ENCODE measurements at regions of chr12 and their contacts with region 1.

Region 1: GRCh38 chr12:120012067-120012621 is 23.1 kb downstream of the BICDL1 start:
- DNase-seq: peak; percentile 87
- ATAC-seq: peak; percentile 70
- H3K4me3 Mint-ChIP-seq: peak overlapping the region; percentile 65
- H3K27ac Mint-ChIP-seq: peak overlapping the region; percentile 99
- H3K4me1 Mint-ChIP-seq: peaks cover 91% of the 10 kb centered on the region
- H3K27me3 Mint-ChIP-seq: no peaks in the 10 kb centered on the region

Region 2: GRCh38 chr12:119980242-119980641 is 31.9 kb before region 1 on chr12:
- CTCF ChIA-PET with region 1: interaction called, 3 read pairs
- POLR2A ChIA-PET with region 1: interaction called, 19 read pairs
- intact Hi-C with region 1: loop called (anchors 1 kb)
- DNase-seq: peak; percentile 21
- ATAC-seq: peak; percentile 96
- H3K4me3 Mint-ChIP-seq: peak overlapping the region; percentile 30
- H3K27ac Mint-ChIP-seq: peak overlapping the region; percentile 69
- H3K4me1 Mint-ChIP-seq: peaks cover 23% of the 10 kb centered on the region
- H3K27me3 Mint-ChIP-seq: peaks cover 6% of the 10 kb centered on the region

Region 3: DNA sequence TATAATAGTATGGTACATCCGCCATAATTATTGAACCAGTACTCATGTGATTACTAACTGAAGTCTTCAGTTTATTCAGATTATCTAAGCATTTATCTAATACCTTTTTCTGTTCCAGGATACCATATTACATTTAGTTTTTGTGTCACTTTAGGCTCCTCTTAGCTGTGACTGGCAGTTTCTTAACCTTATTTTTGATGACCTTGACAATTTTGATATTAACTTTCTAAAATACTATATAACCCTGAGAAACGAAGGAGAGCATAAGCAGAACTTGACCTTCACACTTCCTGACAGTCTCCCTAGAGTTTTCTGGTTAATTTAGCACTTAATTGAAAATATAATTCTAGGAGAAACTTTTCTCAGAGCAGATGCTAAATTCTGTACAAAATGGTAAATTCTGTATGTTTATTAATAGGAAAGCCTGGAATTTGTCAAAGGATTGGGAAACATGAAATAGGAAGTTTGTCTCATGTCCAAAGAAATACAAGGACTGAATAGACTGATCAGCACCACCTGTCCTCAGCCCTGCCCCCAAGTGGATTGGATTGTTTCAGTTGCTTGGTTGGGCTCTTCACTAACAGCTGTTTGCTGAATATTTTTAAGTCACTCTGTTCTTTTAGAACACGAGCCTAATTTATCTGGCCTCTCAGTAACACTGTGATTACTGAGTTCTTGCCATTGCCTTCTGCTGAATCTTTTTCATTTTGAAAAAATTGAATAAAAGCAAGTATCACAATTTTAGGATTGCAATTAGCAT is 17.1 kb before region 1 on chr12:
- CTCF ChIA-PET with region 1: interaction called, 22 read pairs
- POLR2A ChIA-PET with region 1: interaction called, 98 read pairs
- intact Hi-C with region 1: loop called in 1 of 2 experiments (anchors 2 kb)
- DNase-seq: no peak
- ATAC-seq: no peak
- H3K4me3 Mint-ChIP-seq: no peak overlapping the region
- H3K27ac Mint-ChIP-seq: peak overlapping the region; percentile 63
- H3K4me1 Mint-ChIP-seq: peaks cover 78% of the 10 kb centered on the region
- H3K27me3 Mint-ChIP-seq: no peaks in the 10 kb centered on the region

Region 4: DNA sequence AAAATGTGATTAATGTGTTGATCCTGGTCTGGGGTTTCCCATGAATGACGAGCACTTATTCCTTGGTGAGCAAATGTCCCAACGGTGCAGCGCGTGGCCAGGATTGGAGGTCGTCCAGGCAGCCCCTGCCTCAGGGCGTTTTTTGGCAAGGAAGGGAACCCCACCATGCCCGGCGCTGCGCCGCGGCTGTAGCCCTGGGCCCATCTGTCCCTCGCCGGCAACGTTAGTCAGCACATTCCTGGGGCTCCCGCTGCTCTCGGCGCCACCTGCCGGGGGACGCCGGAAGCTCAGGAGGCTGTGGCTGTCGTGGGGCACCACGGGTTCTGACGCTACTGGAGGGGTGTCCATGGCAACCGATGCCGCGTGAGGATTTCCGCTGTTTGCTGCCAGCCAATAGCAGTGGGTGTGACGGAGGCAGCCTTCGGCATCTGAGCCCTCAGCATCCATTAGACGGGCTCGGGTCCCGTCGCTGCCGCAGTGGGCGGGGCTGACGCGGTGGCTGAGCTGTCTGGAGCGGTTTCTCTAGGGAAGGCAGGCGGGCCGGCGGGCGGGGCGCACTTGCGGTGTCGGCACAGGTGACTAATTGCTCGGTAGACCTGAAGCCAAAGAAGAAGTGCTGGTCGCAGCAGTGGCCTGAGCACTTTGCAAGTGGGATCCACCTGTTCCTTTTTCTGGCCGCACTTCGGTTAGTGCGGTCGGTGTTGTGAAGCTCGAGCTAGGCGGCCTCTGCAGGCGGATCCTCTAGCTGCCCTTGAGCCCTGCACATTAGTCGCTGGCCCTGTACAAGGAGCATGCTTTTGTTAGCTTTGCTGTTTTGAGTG is 74.9 kb after region 1 on chr12:
- CTCF ChIA-PET with region 1: interaction called, 11 read pairs
- POLR2A ChIA-PET with region 1: interaction called, 6 read pairs
- intact Hi-C with region 1: loop called (anchors 1 kb)
- DNase-seq: peak; percentile 100
- ATAC-seq: peak; percentile 98
- H3K4me3 Mint-ChIP-seq: peak overlapping the region; percentile 46
- H3K27ac Mint-ChIP-seq: peak overlapping the region; percentile 75
- H3K4me1 Mint-ChIP-seq: peaks cover 41% of the 10 kb centered on the region
- H3K27me3 Mint-ChIP-seq: no peaks in the 10 kb centered on the region

Region 5: DNA sequence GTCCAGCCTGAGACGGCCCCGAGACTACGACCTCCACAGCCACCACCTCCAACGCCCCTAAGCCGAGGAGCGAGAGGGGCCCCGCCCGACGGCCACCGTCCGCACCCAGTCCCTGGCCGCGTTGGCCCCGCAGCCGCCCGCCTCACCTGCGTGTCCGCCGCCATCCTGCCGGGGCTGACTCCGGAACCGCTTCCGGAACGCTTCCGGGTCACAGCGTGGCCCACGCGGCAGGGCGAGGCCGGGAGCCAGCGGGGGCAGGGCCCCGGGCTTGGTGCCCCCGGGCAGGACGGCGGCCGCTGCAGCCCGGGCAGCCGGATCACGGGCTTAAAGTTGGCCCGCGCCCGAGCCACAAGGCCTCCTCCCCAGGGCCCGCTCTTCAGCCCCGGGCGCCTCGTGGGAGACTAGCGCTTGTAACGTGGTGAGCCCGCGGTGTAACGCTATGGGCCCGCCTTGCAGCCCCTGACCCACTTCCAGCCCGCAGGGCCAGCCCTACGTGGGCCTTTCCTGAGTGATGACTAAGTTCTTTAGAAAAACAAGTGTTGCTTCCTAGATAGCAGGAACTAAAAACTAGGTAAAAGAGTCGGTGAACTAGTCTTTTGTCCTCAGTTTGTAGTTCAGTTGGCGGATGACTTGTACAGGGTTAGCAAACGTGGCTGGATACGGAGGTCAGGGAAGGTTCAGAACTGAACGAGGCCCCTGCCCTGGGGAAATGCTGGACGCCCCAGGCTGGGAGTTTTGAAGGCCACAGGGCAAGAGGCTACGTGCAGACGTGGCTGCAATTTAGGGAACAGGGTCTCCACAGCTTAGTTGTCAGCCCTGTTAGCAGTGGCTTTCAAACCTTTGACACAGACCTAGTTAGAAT is 182.6 kb after region 1 on chr12 and contains the start of gene GCN1:
- CTCF ChIA-PET with region 1: interaction called, 3 read pairs
- POLR2A ChIA-PET with region 1: interaction called, 12 read pairs
- intact Hi-C with region 1: loop called in 1 of 2 experiments (anchors 2 kb)
- DNase-seq: peak; percentile 93
- ATAC-seq: peak; percentile 81
- H3K4me3 Mint-ChIP-seq: peak within 1 kb of the TSS; percentile 98
- H3K27ac Mint-ChIP-seq: peak within 1 kb of the TSS; percentile 92
- H3K4me1 Mint-ChIP-seq: peaks cover 45% of the 10 kb centered on the region
- H3K27me3 Mint-ChIP-seq: no peaks in the 10 kb centered on the region
- total RNA-seq, gene GCN1: 125 to 139 TPM

Region 6: GRCh38 chr12:121802846-121803630 is 1790.9 kb after region 1 on chr12:
- CTCF ChIA-PET with region 1: no interaction called
- POLR2A ChIA-PET with region 1: no interaction called
- intact Hi-C with region 1: loop called in 1 of 2 experiments (anchors 5 kb)
- DNase-seq: peak; percentile 95
- ATAC-seq: peak; percentile 62
- H3K4me3 Mint-ChIP-seq: peak overlapping the region; percentile 88
- H3K27ac Mint-ChIP-seq: peak overlapping the region; percentile 99
- H3K4me1 Mint-ChIP-seq: peaks cover 30% of the 10 kb centered on the region
- H3K27me3 Mint-ChIP-seq: no peaks in the 10 kb centered on the region

Measured in activated CD4-positive, alpha-beta T cell treated with anti-CD3 and anti-CD28 coated beads for 36 hours (primary cell).